ENCODE measurements at regions of chr2 and their contacts with region 1.

Region 1: GRCh38 chr2:11829947-11830707 is 83.7 kb downstream of the LPIN1 start:
- DNase-seq: peak; percentile 80
- H3K4me3 Mint-ChIP-seq: peak overlapping the region; percentile 1
- H3K27ac Mint-ChIP-seq: peak overlapping the region; percentile 10
- H3K4me1 Mint-ChIP-seq: peaks cover 42% of the 10 kb centered on the region
- H3K27me3 Mint-ChIP-seq: no peaks in the 10 kb centered on the region

Region 2: GRCh38 chr2:11743846-11744553 is 86.1 kb before region 1 on chr2:
- CTCF ChIA-PET with region 1: no interaction called
- intact Hi-C with region 1: loop called (anchors 1 kb)
- DNase-seq: peak; percentile 92
- H3K4me3 Mint-ChIP-seq: no peak overlapping the region
- H3K27ac Mint-ChIP-seq: peak overlapping the region; percentile 69
- H3K4me1 Mint-ChIP-seq: peaks cover 47% of the 10 kb centered on the region
- H3K27me3 Mint-ChIP-seq: no peaks in the 10 kb centered on the region

Region 3: GRCh38 chr2:12005886-12006681 is 176.0 kb after region 1 on chr2:
- CTCF ChIA-PET with region 1: no interaction called
- intact Hi-C with region 1: loop called (anchors 1 kb)
- DNase-seq: peak; percentile 92
- H3K4me3 Mint-ChIP-seq: no peak overlapping the region
- H3K27ac Mint-ChIP-seq: no peak overlapping the region
- H3K4me1 Mint-ChIP-seq: peaks cover 22% of the 10 kb centered on the region
- H3K27me3 Mint-ChIP-seq: peaks cover 52% of the 10 kb centered on the region

Region 4: DNA sequence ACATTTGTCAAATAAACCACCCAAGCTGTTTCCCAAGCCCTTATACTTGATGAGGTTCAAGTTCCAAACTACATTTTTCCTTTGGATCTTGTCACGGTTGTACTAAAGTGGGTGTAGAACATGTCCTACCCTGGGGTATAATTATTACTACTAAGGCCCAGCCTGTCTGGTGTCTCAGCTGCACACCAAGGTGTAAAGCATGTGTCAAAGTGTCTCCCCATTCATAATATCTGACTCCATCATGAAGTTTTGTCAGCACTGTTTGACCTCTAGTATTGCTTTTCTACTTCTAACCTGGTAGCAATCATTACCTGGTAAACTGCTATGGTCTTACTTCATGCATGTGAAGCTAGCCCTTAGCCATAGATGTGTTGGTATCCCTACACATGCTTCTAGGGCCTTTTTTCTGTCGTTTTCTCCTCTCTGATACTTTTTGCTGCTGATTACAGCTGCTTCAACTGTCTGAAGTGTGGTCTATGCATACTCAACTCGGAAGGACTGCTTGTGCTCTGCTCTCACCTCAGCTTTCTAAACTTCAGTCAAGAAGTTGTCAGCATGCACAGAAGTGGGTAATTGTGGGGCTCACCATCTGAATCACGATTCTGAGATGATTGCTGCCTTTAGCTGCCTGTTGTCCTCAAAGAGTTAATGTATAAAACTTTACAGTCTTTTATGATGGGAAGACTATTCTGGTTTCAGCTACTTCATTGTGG is 440.9 kb after region 1 on chr2:
- CTCF ChIA-PET with region 1: interaction called, 4 read pairs
- intact Hi-C with region 1: loop called (anchors 1 kb)
- DNase-seq: peak; percentile 53
- H3K4me3 Mint-ChIP-seq: no peak overlapping the region
- H3K27ac Mint-ChIP-seq: no peak overlapping the region
- H3K4me1 Mint-ChIP-seq: peaks cover 20% of the 10 kb centered on the region
- H3K27me3 Mint-ChIP-seq: no peaks in the 10 kb centered on the region

Region 5: GRCh38 chr2:12507295-12507694 is 677.2 kb after region 1 on chr2:
- CTCF ChIA-PET with region 1: no interaction called
- intact Hi-C with region 1: loop called (anchors 2 kb)
- DNase-seq: peak; percentile 76
- H3K4me3 Mint-ChIP-seq: no peak overlapping the region
- H3K27ac Mint-ChIP-seq: no peak overlapping the region
- H3K4me1 Mint-ChIP-seq: peaks cover 68% of the 10 kb centered on the region
- H3K27me3 Mint-ChIP-seq: no peaks in the 10 kb centered on the region

Region 6: DNA sequence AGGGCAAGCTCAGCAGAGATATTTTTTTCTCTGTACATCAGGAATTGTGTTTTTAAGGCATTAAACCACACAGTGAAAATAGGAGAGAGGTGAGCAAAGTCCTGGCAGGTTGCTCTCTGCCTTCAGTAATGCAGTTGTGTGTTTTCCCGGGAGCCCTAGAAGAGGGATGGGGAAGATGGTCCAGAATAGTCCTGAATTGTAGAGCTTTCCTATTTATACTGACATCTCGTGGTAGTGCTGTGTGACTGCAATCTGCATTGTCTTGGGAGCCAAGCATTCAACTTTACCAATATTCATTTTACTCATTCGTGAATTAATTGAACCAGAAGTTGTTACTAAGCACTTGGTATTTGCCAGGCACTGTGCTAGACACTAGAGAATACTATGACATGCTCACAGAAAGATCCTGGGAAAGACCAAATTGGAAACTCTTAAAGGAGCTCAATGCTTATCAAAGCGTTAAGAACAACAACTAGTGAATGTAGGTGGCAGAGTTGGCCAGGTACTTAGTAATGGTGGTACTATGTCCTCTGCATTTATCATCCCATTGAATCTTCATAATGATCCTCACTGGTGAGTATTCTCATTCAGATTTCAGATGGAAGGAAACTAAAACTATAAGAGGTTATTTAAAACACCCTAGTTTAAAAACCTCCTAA is 1101.2 kb after region 1 on chr2:
- CTCF ChIA-PET with region 1: interaction called, 7 read pairs
- intact Hi-C with region 1: loop called (anchors 1 kb)
- DNase-seq: no peak
- H3K4me3 Mint-ChIP-seq: no peak overlapping the region
- H3K27ac Mint-ChIP-seq: no peak overlapping the region
- H3K4me1 Mint-ChIP-seq: peaks cover 8% of the 10 kb centered on the region
- H3K27me3 Mint-ChIP-seq: peaks cover 2% of the 10 kb centered on the region

Measured in activated naive CD4-positive, alpha-beta T cell treated with anti-CD3 and anti-CD28 coated beads for 36 hours (primary cell).